Activated CD8-positive, alpha-beta memory T cell treated with anti-CD3 and anti-CD28 coated beads, Interleukin-2, amount 10 ng/mL, durations not matched to agents 7 days and 5 days (primary cell): ENCODE measurements at regions of chr6 and their contacts with region 1.

Region 1: DNA sequence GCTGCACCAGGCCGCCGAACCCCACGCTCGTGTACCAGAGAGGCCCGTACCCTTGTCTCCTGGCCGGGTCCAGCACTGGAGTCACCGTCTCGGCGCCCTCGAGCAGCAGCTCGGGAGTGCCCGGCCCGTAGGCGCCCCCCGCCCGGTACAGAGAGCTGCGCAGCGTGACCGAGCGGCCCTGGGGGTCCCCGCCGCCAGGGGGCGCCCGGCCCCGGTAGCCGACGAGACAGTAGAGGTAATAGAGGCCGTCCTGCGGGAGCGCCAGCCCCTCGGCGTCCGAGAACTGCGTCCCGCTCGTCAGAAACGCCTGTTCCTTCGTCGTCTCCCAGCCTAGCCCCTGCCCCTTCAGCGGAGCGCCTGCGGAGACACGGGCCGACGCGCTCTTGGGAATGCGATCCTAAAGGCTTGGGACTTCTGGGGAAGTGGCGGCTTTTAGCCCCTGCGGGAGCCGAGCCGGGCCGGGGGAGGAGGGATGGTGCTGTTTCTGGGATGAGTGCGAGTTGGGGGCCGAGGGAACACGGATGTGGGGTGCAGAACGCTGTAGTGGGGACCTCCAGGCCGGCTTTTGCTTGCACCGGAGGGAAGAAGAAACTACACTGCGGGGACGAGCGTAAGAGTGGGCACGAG is 1.3 kb downstream of the LTB start:
- DNase-seq: peak; percentile 92
- ATAC-seq: peak; percentile 71
- H3K4me3 Mint-ChIP-seq: peak overlapping the region; percentile 86
- H3K27ac Mint-ChIP-seq: peak overlapping the region; percentile 94
- H3K4me1 Mint-ChIP-seq: peaks cover 70% of the 10 kb centered on the region
- H3K27me3 Mint-ChIP-seq: no peaks in the 10 kb centered on the region

Region 2: GRCh38 chr6:31356946-31357466 is 223.9 kb before region 1 on chr6 and contains the start of gene HLA-B:
- CTCF ChIA-PET with region 1: no interaction called
- DNase-seq: peak; percentile 91
- ATAC-seq: peak; percentile 75
- H3K4me3 Mint-ChIP-seq: peak within 1 kb of the TSS; percentile 99
- H3K27ac Mint-ChIP-seq: peak within 1 kb of the TSS; percentile 100
- H3K4me1 Mint-ChIP-seq: peaks cover 61% of the 10 kb centered on the region
- H3K27me3 Mint-ChIP-seq: peaks cover 7% of the 10 kb centered on the region
- total RNA-seq, gene HLA-B: 4,786 to 5,045 TPM

Region 3: GRCh38 chr6:31493875-31494694 is 86.8 kb before region 1 on chr6:
- CTCF ChIA-PET with region 1: interaction called, 19 read pairs
- DNase-seq: peak; percentile 86
- ATAC-seq: peak; percentile 54
- H3K4me3 Mint-ChIP-seq: peak overlapping the region; percentile 76
- H3K27ac Mint-ChIP-seq: peak overlapping the region; percentile 96
- H3K4me1 Mint-ChIP-seq: peaks cover 56% of the 10 kb centered on the region
- H3K27me3 Mint-ChIP-seq: no peaks in the 10 kb centered on the region

Region 4: DNA sequence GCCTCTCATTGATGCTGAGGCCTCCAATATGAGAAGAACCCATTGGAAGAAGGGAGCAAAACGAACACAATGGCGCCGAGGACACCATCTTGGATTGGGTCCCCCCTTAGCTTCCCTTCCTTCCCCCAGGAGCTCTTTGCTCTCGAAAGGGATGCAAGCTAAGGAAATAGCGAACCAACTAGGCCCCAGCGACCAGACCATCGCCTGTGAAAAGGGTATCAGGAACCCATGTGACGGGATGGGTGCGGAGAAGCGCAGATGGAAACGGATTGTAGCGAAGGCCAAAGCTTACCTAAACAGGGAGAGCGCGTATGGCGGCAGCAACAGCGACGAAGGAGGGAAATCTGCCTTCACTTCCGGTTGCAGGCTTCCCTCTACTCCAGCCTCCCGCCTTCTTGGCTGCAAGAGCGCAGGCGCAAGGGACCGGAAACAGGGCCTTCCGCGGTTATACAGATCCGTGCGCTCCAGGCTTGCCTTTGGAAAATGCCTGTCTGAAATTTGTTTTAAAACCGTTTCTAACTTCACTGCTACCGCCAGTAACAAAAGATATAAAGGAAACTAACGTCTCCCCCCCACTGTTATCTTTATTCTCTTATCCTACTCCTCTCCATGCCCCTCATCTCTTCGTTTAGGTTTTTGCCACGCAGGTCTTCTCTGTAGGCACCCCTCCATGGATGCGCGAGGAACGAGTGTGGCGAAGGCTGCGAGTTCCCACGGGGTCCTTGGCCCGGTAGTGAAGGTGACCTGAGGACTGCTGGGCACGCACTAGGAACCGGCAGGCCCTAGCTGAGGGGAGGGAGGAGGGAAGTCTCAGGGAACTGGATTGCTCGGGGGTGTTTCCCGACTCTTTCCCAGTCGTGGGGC is 39.0 kb before region 1 on chr6 and contains the start of gene DDX39B:
- CTCF ChIA-PET with region 1: interaction called, 952 read pairs
- DNase-seq: peak; percentile 97
- ATAC-seq: peak; percentile 80
- H3K4me3 Mint-ChIP-seq: peak within 1 kb of the TSS; percentile 94
- H3K27ac Mint-ChIP-seq: peak within 1 kb of the TSS; percentile 90
- H3K4me1 Mint-ChIP-seq: peaks cover 50% of the 10 kb centered on the region
- H3K27me3 Mint-ChIP-seq: no peaks in the 10 kb centered on the region
- total RNA-seq, gene DDX39B: 495 to 503 TPM

Region 5: DNA sequence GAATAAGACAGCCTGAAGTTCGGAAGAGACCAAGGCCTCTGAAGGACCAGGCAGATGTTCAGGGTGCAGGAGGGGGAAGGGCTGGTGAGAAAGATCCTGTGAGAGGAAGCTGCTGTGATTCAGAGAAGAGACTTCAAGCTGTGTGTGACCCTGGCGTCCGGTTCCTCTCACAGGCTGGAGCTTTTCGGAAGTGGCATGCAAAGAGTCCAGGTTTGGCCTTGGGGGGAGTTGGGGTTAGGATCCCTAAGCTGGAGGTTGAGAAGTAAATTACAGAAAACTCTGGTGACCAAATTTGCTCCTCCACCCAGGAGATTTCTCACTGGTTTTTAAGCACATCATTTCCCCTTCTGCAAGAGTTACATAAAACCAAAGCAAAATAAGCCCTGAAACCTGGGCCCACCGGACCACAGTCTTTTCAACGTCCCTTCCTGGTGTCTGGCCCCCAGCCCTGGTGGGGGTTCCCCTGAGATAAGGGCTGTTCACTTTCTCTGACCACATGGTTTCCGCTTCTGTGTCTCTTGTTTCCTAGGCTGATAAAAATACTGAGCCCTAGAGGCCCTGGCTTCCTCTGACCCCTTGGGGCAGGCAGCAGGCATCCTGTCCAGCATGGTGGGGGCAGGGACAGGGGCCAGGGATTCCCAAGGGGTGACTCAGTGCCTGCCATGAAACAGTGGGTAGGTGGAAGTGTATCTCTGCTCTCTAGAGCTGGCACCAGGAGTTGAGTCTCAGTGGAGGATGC is 20.8 kb before region 1 on chr6:
- CTCF ChIA-PET with region 1: interaction called, 189 read pairs
- DNase-seq: peak; percentile 79
- ATAC-seq: peak; percentile 77
- H3K4me3 Mint-ChIP-seq: peak overlapping the region; percentile 26
- H3K27ac Mint-ChIP-seq: peak overlapping the region; percentile 82
- H3K4me1 Mint-ChIP-seq: peaks cover 61% of the 10 kb centered on the region
- H3K27me3 Mint-ChIP-seq: peaks cover 33% of the 10 kb centered on the region

Region 6: GRCh38 chr6:31568537-31568961 is 12.4 kb before region 1 on chr6:
- CTCF ChIA-PET with region 1: interaction called, 931 read pairs
- DNase-seq: peak; percentile 89
- ATAC-seq: peak; percentile 68
- H3K4me3 Mint-ChIP-seq: peak overlapping the region; percentile 8
- H3K27ac Mint-ChIP-seq: peak overlapping the region; percentile 67
- H3K4me1 Mint-ChIP-seq: peaks cover 63% of the 10 kb centered on the region
- H3K27me3 Mint-ChIP-seq: peaks cover 49% of the 10 kb centered on the region